ENCODE measurements at regions of chr11 and their contacts with region 1.

Region 1: GRCh38 chr11:67583247-67584204 is at the start of gene GSTP1:
- DNase-seq: peak; percentile 95
- H3K4me3 ChIP-seq: peak within 1 kb of the TSS; percentile 68 to 77
- H3K27ac ChIP-seq: peak within 1 kb of the TSS; percentile 61 to 84
- H3K4me1 ChIP-seq: peaks cover 10 to 14% of the 10 kb centered on the region in 2 experiments; a peak in 3 of 4 replicates
- H3K27me3 ChIP-seq: no peaks in the 10 kb centered on the region
- CTCF ChIP-seq: peak; percentile 74
- EP300 ChIP-seq: peak in 1 of 2 experiments; percentile 34; a peak in 2 of 4 replicates
- RAD21 ChIP-seq: peak; percentile 51
- polyA plus RNA-seq, gene GSTP1: 488 and 745 TPM in 2 replicates

Region 2: DNA sequence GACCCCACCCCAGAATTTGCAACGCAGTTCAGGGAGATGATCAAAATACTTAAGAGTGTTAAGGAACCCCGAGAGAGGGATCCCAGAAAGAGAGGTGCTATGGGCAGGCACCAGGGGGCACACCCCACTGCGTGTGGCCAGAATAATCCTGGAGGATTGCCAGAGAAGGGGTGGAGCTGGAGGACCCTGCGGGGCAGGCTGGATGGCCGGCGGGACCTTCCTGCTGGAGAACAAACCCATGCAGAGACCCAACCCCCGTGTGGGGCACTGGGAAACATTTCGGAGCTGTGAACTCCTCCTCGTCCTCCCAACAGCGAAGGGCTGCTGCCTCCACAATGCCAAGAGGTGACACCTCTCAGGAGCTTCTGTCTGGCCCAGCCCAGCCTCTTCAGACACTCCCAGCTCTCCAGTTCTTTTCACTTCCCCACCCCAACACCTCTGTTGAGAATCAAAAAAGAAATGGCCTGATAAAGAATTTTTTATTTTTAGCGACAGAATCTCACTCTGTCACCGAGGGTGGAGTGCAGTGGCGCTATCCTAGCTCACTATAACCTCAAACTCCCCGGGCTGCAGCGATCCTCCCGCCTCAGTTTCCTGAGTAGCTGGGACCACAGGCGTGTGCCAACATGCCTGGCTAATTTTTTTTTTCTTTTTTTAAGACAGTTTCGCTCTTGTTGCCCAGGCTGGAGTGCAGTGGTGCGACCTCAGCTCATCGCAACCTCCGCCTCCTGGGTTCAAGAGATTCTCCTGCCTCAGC is 501.3 kb before region 1 on chr11:
- CTCF ChIA-PET with region 1: no interaction called
- POLR2A ChIA-PET with region 1: no interaction called
- DNase-seq: peak; percentile 55
- H3K4me3 ChIP-seq: no peak overlapping the region
- H3K27ac ChIP-seq: no peak overlapping the region
- H3K4me1 ChIP-seq: no peaks in the 10 kb centered on the region
- H3K27me3 ChIP-seq: no peaks in the 10 kb centered on the region
- CTCF ChIP-seq: no peak
- EP300 ChIP-seq: no peak
- RAD21 ChIP-seq: 0 out of 2 replicates have a peak, but pooled peaks have one; percentile 15

Region 3: GRCh38 chr11:67486481-67487195 is 96.9 kb before region 1 on chr11:
- CTCF ChIA-PET with region 1: no interaction called
- POLR2A ChIA-PET with region 1: no interaction called
- DNase-seq: no peak
- H3K4me3 ChIP-seq: no peak overlapping the region
- H3K27ac ChIP-seq: no peak overlapping the region
- H3K4me1 ChIP-seq: peaks cover 6 to 17% of the 10 kb centered on the region in 2 experiments; a peak in 3 of 4 replicates
- H3K27me3 ChIP-seq: no peaks in the 10 kb centered on the region
- CTCF ChIP-seq: no peak
- EP300 ChIP-seq: no peak
- RAD21 ChIP-seq: no peak

Region 4: GRCh38 chr11:67572747-67573419 is 10.6 kb before region 1 on chr11:
- CTCF ChIA-PET with region 1: interaction called, 43 read pairs
- POLR2A ChIA-PET with region 1: interaction called, 5 read pairs
- DNase-seq: peak; percentile 53
- H3K4me3 ChIP-seq: no peak overlapping the region
- H3K27ac ChIP-seq: no peak overlapping the region
- H3K4me1 ChIP-seq: peaks cover 0 to 6% of the 10 kb centered on the region in 2 experiments; a peak in 1 of 4 replicates
- H3K27me3 ChIP-seq: peaks cover 6% of the 10 kb centered on the region
- CTCF ChIP-seq: peak; percentile 64
- EP300 ChIP-seq: no peak
- RAD21 ChIP-seq: peak; percentile 79

Region 5: DNA sequence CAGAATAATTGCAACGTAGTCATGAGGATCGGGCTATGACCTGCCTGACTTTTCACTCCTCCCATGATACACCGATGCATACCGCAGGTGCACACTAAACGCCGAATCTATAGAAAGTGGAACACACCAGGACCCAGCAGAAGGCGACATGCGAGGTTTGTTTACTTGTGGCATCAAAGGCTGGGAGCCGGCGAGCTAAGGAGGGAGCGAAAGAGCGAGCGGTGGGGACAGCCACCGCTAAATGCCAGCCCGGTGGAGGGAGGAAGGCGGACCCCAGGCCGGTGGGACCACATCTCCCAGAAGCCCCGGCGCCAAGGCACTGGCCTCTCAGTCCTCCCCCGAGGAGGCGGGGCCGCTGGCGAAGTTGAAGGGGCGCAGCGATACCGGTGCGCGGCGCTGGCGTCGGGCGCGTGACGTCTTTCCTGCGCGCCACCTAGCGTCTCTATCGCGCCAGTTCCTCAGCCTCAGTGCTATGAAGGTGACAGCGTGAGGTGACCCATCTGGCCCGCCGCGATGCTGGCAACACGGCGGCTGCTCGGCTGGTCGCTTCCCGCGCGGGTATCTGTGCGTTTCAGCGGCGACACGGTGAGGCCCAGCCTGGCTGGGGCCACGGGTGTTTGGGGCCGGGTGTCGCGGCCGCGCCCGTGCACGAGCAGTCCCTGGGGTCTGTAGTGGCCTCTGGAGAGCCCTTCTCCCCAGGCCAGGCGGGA is 23.1 kb after region 1 on chr11 and contains the start of gene NDUFV1:
- CTCF ChIA-PET with region 1: interaction called, 10 read pairs
- POLR2A ChIA-PET with region 1: interaction called, 3 read pairs
- DNase-seq: peak; percentile 98
- H3K4me3 ChIP-seq: peak within 1 kb of the TSS; percentile 96 to 98
- H3K27ac ChIP-seq: peak within 1 kb of the TSS in 1 of 2 experiments; percentile 55; a peak in 2 of 4 replicates
- H3K4me1 ChIP-seq: peaks cover 7 to 13% of the 10 kb centered on the region in 2 experiments; a peak in 3 of 4 replicates
- H3K27me3 ChIP-seq: no peaks in the 10 kb centered on the region
- CTCF ChIP-seq: peak; percentile 52
- EP300 ChIP-seq: no peak
- RAD21 ChIP-seq: 0 out of 2 replicates have a peak, but pooled peaks have one; percentile 24
- polyA plus RNA-seq, gene NDUFV1: 220 and 278 TPM in 2 replicates